Right cardiac atrium (tissue), 5 donors: ENCODE measurements at regions of chr15 and their contacts with region 1.

Region 1: DNA sequence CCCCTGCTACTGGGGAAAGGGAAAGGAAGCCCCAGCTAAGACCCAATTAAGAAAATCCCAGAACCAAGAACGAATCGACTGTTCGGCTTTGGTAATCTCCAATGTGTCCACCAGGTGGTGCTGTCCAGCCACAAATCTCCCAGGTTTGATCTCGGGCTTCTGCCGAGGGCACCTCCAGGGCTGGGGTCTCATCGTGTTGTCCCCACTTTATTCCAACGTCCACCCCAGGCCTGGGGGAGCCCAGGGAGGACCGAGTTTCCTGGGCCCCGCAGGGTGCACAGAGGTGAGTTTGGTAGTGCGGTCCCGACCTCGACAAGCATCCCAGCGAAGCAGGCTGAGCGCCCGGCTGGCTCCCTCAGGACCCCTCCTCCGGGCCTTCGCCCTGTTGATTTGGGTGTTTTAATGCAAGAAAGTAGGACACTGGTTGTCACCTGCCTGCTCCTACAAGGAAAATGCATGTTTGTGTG is 185.1 kb downstream of the GOLGA6L6 start:
- DNase-seq: peak; percentile 59 to 77 (median 75)
- ATAC-seq: peak; percentile 20 to 40
- H3K4me3 ChIP-seq: no peak overlapping the region
- H3K27ac ChIP-seq: no peak overlapping the region
- H3K4me1 ChIP-seq: no peaks in the 10 kb centered on the region
- H3K27me3 ChIP-seq: no peaks in the 10 kb centered on the region

Region 2: DNA sequence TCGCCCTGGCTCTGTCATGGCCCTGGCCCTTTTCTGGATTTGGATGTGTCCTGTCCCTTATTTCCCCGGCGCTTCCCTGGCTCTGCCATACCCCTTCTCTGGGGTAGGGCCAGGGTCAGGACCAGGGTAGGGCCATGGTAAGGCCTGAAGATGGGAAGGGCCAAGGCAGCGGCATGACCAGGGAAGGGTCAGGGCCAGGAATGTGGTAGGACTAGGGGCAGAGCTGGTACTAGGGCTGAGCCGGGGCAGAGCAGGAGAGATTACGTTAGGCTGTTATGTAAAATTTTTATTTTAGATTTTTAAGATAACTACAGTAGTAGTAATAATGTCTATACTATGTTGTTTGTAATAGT is 51.5 kb before region 1 on chr15:
- intact Hi-C with region 1: no loop called
- DNase-seq: peak in 1 of 3 donors; percentile 26
- ATAC-seq: no peak
- H3K4me3 ChIP-seq: no peak overlapping the region
- H3K27ac ChIP-seq: no peak overlapping the region
- H3K4me1 ChIP-seq: no peaks in the 10 kb centered on the region
- H3K27me3 ChIP-seq: no peaks in the 10 kb centered on the region

Region 3: GRCh38 chr15:20409247-20409646 is 52.8 kb after region 1 on chr15:
- intact Hi-C with region 1: loop called in 1 of 4 experiments (anchors 5 kb)
- DNase-seq: no peak
- ATAC-seq: peak; percentile 14 to 55
- H3K4me3 ChIP-seq: no peak overlapping the region
- H3K27ac ChIP-seq: no peak overlapping the region
- H3K4me1 ChIP-seq: no peaks in the 10 kb centered on the region
- H3K27me3 ChIP-seq: no peaks in the 10 kb centered on the region

Region 4: GRCh38 chr15:22224241-22224671 is 1867.8 kb after region 1 on chr15:
- intact Hi-C with region 1: loop called in 1 of 4 experiments (anchors 5 kb)
- DNase-seq: no peak
- ATAC-seq: no peak
- H3K4me3 ChIP-seq: no peak overlapping the region
- H3K27ac ChIP-seq: no peak overlapping the region
- H3K4me1 ChIP-seq: no peaks in the 10 kb centered on the region
- H3K27me3 ChIP-seq: no peaks in the 10 kb centered on the region

Region 5: GRCh38 chr15:22240951-22241350 is 1884.5 kb after region 1 on chr15:
- intact Hi-C with region 1: loop called in 1 of 4 experiments (anchors 10 kb)
- DNase-seq: no peak
- ATAC-seq: no peak
- H3K4me3 ChIP-seq: no peak overlapping the region
- H3K27ac ChIP-seq: no peak overlapping the region
- H3K4me1 ChIP-seq: no peaks in the 10 kb centered on the region
- H3K27me3 ChIP-seq: no peaks in the 10 kb centered on the region